Activated CD8-positive, alpha-beta T cell treated with anti-CD3 and anti-CD28 coated beads for 36 hours (primary cell): ENCODE measurements at regions of chr1 and their contacts with region 1.

Region 1: GRCh38 chr1:12511516-12512468 is 106.2 kb downstream of the DHRS3 start:
- DNase-seq: no peak
- ATAC-seq: no peak
- H3K4me3 Mint-ChIP-seq: peak overlapping the region; percentile 75
- H3K27ac Mint-ChIP-seq: peak overlapping the region; percentile 100
- H3K4me1 Mint-ChIP-seq: peaks cover 60% of the 10 kb centered on the region
- H3K27me3 Mint-ChIP-seq: no peaks in the 10 kb centered on the region
- CTCF ChIP-seq: no peak

Region 2: DNA sequence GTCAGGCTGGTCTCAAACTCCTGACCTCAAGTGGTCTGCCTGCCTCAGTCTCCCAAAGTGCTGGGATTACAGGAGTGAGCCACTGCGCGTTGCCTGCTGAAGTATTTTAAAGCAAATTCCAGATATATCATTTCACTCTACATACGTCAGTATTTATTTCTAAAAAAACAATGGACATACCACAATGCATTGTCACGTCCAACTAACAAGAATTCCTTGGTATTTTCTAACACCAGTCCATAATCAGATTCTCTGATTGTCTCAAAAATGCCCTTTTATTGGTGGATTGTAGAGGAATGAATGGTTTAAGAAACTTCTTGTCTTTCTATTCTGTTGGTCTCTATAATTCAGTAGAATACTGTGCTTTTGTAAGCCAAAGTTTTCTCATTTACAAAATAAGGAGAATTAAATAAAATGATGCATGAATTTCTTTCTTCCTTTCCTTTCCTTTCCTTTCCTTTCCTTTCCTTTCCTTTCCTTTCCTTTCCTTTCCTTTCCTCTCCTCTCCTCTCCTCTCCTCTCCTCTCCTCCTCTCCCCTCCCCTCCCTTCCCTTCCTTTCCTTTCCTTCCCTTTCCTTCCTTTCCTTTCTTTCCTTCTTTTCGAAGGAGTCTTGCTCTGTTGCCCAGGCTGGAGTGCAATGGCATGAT is 226.2 kb before region 1 on chr1:
- CTCF ChIA-PET with region 1: no interaction called
- POLR2A ChIA-PET with region 1: no interaction called
- intact Hi-C with region 1: no loop called
- DNase-seq: no peak
- ATAC-seq: no peak
- H3K4me3 Mint-ChIP-seq: no peak overlapping the region
- H3K27ac Mint-ChIP-seq: no peak overlapping the region
- H3K4me1 Mint-ChIP-seq: peaks cover 6% of the 10 kb centered on the region
- H3K27me3 Mint-ChIP-seq: no peaks in the 10 kb centered on the region
- CTCF ChIP-seq: no peak

Region 3: DNA sequence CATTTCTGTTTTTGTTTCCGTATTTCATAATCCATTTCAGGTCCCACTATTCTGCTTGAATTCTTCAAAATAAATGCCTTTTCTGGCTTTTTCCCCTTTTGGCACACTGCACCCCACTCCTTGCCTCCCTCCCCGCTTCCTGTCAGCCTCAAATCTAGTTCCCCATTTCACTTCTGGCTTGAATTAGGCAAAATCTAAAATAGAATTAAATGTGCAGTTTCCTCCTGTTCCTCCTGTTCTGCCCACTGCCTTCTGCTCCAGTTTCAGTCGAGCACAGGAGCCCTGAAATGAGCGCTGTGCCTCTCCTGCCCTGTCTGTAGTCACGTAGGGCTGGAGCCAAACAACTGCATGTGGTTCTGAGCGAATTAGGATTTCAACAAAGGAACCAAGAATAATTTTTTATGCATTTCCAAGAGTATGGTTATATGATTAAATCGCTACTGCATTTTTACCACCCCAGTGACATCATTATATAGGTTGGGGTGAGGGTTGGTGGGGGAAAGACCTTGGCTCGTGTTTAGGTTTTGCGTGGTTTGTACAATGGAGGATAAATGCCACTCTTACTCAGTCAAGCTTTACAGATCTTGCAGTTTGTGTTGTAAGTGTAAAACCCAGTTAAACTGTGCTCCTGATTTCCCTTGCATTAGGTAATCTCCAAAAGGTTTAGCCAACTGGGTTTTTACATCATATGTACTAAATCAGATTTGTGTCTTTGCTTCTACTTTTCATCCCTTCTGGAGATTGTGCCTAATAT is 167.0 kb before region 1 on chr1:
- CTCF ChIA-PET with region 1: no interaction called
- POLR2A ChIA-PET with region 1: no interaction called
- intact Hi-C with region 1: no loop called
- DNase-seq: peak; percentile 44
- ATAC-seq: peak; percentile 55
- H3K4me3 Mint-ChIP-seq: peak overlapping the region; percentile 55
- H3K27ac Mint-ChIP-seq: peak overlapping the region; percentile 94
- H3K4me1 Mint-ChIP-seq: peaks cover 71% of the 10 kb centered on the region
- H3K27me3 Mint-ChIP-seq: no peaks in the 10 kb centered on the region
- CTCF ChIP-seq: no peak

Region 4: DNA sequence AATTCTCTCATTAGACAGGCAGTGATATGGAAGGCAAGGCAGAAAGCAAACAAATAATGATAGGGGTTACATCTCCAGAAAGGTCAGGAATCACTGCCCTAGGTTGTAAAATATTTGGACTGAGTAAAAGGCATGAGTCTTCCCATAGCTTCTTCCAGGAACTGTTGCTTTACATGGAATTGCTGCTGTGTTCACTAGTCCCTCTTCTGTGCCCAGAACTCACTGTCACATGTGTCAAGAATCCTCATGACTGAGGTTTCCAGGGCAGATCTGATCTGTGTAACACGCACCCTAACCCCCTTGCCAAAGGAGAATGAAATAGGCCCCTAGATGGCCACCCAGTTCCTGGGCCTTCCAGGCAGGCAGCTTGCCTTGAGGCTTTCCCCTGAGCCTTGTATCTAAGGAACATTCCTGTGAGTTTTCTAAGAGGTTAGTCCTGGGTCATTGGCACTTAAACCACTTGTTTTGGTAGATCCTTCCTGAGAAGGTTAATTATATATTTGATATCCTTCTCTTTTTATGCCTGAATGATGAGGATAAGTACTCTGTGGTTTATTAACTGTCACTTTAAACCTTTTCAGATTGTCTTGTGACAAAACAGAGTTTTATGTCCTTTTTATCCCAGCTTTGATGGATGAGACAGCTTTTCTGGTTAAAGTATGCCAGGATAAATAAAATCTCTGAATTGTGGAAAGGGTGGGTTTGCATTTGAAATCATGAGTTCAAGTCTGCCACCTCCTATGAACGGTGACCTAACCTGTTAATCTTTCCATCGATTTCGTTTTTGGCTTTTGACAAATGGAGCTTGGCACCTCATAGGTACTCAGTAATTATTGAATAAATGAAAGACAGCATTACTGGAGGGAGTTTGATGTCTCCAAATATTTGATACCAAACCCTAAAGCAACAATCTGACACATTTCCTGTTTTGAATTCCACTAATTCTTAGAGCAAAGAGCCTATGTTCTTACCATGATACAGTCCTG is 57.1 kb before region 1 on chr1:
- CTCF ChIA-PET with region 1: interaction called, 12 read pairs
- POLR2A ChIA-PET with region 1: interaction called, 31 read pairs
- intact Hi-C with region 1: no loop called
- DNase-seq: no peak
- ATAC-seq: no peak
- H3K4me3 Mint-ChIP-seq: peak overlapping the region; percentile 10
- H3K27ac Mint-ChIP-seq: peak overlapping the region; percentile 94
- H3K4me1 Mint-ChIP-seq: peaks cover 87% of the 10 kb centered on the region
- H3K27me3 Mint-ChIP-seq: no peaks in the 10 kb centered on the region
- CTCF ChIP-seq: no peak

Region 5: DNA sequence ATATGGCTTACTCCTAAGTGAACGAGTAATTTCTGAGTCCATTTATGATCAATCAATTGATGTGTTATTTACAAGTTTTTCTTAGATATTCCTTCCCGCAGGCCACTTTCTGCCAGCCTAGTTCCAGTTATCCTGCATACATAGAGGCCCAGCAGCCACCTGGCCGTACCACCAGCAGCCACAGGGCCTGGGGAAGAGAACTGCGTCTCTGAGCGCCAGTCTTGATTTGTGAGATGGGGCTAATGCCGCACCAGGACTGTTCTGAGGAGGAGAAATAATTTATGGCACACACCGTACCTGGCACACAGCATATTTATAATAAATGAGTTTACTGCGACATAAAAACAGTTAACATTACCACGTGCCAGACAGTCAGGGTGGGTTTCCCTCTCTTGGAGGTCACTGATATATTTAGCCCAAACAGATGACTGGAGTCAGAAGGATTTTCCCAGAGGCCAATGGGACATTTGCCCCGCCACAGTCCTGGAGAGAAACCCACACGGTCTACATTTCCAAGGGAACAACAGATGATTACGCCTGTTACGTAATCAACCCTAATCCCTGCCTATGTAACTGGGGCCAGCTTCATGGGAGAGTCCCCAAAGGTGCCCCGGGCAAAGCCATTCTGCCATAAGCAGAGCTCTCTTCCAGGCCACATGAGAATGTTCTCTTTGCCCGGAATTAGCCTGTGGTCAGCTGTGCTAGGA is 68.2 kb after region 1 on chr1:
- CTCF ChIA-PET with region 1: no interaction called
- POLR2A ChIA-PET with region 1: no interaction called
- intact Hi-C with region 1: no loop called
- DNase-seq: no peak
- ATAC-seq: no peak
- H3K4me3 Mint-ChIP-seq: no peak overlapping the region
- H3K27ac Mint-ChIP-seq: no peak overlapping the region
- H3K4me1 Mint-ChIP-seq: peaks cover 2% of the 10 kb centered on the region
- H3K27me3 Mint-ChIP-seq: no peaks in the 10 kb centered on the region
- CTCF ChIP-seq: no peak